Cardiac septum (tissue), 1 donor: ENCODE measurements at regions of chr17 and their contacts with region 1.

Region 1: DNA sequence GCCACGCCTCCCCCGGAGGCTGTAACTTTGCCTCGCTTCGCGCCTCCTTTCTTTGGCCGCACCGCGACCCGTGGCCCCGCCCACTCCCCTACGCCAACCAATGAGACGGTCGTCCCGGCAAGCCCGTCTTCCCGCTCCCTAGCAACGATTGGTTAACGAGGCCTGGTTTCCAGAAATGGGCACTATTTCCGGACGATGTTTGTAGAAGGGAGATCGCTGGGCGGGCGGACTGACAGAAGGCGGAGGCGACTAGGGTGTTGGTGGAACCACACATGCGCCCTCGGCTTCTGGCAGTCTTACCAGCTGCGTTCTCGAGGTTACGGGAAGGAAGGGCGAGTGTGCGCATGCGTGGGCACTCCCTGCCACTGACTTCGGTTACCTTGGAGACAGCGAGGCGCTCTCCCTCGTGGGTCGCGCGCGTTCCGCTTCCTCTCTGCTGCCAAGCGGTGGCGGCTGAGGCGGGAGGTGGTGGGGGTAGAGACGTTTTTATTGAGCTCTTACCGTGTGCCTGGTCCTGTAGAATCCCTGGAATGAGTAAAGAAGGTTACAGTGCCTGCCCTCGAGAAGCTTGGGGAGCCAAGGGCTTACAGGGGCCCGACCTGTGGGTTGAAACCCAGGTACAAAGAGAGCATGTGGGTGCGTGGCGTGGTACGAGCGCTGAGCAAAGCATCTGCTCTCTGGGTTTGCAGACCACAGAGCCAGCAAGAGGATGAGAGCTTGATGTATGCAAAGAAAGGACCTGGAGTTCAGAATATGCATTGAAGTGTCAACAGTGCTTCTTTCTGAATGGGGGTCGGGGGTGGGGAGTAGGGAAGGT is 500 bp upstream of the MAP3K14 start:
- DNase-seq: peak; percentile 100

Region 2: GRCh38 chr17:45172454-45173286 is 144.7 kb before region 1 on chr17:
- intact Hi-C with region 1: no loop called
- DNase-seq: no peak

Region 3: GRCh38 chr17:45265821-45266220 is 51.5 kb before region 1 on chr17:
- intact Hi-C with region 1: no loop called
- DNase-seq: no peak

Region 4: DNA sequence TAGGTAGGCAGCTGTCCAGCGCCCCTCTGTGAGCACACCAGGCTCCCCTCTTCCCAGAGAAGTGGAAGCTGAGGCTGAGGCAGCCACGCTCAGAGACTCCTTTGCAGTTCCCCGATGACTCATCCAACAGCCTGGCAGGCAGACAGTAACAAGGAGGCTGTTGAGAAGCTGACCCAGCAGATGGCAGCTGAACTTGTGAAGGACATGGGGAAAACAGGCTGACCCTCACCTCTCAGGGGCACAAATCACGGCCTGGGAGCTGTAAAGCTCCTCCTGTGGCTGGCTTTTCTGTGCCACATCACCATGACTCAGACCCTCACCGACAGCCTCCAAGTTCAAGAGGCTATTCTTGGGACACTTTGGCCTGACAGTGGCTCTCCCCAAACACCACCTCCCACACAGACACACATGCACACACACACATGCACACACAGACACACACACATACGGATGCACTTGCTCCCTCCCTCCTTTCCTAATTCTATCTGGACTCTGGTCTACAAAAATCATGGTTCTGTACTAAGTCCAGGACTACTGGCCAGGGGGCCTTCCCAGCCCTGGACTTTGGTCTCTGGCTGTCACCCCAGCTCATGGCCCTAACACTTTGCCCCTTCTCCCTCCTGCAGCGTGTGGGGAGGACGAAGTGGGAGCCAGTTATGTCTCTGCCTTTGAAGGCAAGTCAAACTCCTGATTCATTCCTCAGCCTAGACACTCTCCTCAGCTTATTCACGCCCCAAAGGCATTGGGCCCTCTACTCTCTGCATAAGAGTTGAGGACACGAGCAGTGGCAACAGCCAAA is 23.7 kb before region 1 on chr17:
- intact Hi-C with region 1: loop called (anchors 2 kb)
- DNase-seq: peak; percentile 89

Region 5: DNA sequence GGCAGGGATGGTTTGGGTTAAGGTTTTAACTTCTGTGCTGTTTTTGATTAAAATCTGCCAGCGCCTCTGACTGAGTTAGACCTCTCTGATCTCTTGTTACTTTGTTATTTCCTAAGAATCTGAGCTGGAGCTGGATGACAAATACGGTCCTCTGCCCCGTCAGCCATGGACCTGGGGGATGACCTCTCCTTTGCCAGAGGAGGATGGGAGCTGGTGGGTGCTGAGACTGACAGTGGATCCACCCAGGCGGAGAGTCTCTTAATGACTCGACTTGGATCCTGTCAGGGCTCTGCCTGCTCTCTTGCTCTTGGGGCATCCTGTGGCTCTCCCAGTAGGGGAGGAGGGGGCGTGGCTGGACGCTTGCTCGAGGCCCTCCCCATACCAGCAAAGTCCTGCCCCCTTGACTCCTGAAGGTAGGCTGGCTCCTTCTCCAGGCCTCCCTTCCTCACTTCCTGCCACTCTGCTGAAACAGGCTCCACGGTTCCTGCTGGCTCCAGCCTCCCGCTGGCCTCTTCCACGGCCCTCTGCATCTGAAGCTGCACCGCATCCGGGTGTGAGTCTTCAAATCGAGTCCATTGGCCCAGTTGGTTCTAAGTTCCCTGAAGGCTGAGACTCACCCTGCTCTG is 24.3 kb after region 1 on chr17:
- intact Hi-C with region 1: no loop called
- DNase-seq: peak; percentile 78

Region 6: DNA sequence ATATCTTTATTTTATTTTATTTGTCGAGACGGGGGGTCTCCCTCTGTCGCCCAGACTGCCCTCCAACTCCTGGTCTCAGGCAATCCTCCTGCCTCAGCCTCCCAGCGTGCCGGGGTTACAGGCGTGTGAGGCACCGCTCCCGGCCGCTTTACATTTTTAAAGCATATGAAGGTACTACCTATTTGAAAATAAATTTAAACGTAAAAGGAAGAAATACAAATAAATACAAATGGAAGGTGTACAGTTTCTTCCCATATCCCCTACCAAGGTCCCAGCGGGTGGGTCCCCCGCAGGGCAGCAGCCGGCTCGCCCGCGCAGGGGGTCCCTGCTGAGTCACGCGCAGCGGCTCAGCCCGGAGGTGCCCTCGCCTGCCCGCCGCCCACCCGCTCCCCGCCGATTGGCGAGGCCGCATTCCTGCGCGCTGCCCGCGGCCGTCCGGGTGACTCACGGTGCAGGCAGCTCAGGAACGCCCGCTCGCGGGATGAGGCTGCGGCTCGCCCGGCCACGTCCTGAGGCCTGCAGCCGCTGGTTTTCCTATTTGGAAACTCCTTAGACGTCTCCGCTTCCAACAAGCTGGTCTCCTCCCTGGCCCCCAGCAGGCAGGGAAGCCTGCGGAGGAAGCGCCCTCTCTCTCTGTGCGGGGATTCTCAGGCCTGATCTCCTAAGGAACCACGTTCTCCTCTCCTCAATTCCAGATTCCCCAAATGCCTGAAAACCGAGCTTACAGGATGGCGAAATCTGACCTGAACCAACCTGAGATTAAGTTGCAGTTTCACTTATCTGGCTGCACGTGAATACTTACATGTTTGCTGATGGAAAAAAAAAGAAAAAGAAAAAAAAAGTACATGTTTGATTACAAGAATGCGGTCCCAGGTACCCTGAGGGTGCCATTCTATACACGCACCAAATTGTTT is 54.4 kb after region 1 on chr17:
- intact Hi-C with region 1: loop called (anchors 2 kb)
- DNase-seq: peak; percentile 89